Gastrocnemius medialis (tissue), 4 donors: ENCODE measurements at regions of chr15 and their contacts with region 1.

Region 1: DNA sequence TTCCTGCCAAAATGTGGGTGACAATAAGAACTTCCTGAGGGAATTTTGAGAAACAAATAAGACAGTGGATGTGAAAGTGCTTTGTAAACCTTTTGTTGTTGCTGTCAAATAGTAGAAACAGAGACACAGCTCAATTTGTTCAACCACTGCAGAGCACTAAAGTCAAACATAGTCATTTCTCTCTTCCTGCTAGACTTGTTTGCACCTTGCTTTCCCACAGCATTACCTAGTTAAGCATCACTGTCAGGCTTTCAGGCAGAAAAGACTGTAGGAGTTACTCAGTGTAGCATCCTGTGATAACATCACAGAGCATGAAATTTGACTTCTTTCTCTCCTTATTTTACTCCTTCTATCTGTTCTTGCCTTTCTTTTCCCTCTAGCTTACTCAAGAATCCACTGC is 27.1 kb downstream of the SLC12A1 start:
- DNase-seq: no peak
- ATAC-seq: no peak
- H3K4me3 ChIP-seq: no peak overlapping the region
- H3K27ac ChIP-seq: no peak overlapping the region
- H3K4me1 ChIP-seq: no peaks in the 10 kb centered on the region
- H3K27me3 ChIP-seq: no peaks in the 10 kb centered on the region
- CTCF ChIP-seq: no peak
- POLR2A ChIP-seq: no peak

Region 2: DNA sequence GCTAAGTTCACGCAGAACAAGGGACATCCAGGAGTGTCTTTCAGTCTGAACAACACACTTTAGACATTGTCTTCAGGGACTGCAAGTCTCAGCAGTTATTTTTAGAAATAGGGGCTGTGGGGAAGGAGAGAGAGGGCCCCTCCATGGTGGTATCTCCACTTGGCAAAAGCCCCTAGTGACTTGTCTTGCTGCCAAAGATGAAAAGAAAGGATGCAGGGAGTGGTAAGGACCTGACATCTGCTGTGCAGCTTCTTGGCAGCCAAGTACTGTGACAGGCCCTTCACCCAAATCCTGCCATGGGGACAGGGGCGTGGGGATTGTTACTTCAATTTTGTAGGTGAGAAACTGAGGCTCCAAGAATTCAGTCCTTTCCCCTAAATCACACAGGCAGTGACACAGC is 536.9 kb before region 1 on chr15:
- in situ Hi-C with region 1: no loop called
- intact Hi-C with region 1: no loop called
- DNase-seq: no peak
- ATAC-seq: no peak
- H3K4me3 ChIP-seq: no peak overlapping the region
- H3K27ac ChIP-seq: no peak overlapping the region
- H3K4me1 ChIP-seq: no peaks in the 10 kb centered on the region
- H3K27me3 ChIP-seq: no peaks in the 10 kb centered on the region
- CTCF ChIP-seq: no peak
- POLR2A ChIP-seq: no peak

Region 3: GRCh38 chr15:48149858-48150257 is 83.4 kb before region 1 on chr15:
- in situ Hi-C with region 1: no loop called
- intact Hi-C with region 1: loop called (anchors 10 kb)
- DNase-seq: no peak
- ATAC-seq: no peak
- H3K4me3 ChIP-seq: no peak overlapping the region
- H3K27ac ChIP-seq: no peak overlapping the region
- H3K4me1 ChIP-seq: no peaks in the 10 kb centered on the region
- H3K27me3 ChIP-seq: no peaks in the 10 kb centered on the region
- CTCF ChIP-seq: no peak
- POLR2A ChIP-seq: no peak

Region 4: DNA sequence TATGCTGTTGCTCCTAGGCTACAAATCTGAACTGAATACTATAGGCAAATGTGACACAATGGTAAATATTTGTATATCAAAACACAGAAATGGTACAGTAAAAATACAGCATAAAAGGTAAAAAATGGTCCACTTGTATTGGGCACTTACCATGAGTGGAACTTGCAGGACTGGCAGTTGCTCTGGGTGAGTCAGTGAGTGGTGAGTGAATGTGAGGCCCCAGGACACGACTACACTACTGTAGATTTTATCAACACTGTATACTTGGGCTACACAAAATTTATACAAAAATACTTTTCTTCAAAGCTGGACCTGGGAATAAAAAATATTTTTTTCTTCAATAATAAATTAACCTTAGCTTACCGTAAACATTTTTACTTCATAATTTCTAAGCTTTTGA is 56.4 kb after region 1 on chr15:
- in situ Hi-C with region 1: no loop called
- intact Hi-C with region 1: no loop called
- DNase-seq: no peak
- ATAC-seq: no peak
- H3K4me3 ChIP-seq: no peak overlapping the region
- H3K27ac ChIP-seq: no peak overlapping the region
- H3K4me1 ChIP-seq: no peaks in the 10 kb centered on the region
- H3K27me3 ChIP-seq: peaks cover 0 to 5% (median 0%) of the 10 kb centered on the region in 3 donors
- CTCF ChIP-seq: no peak
- POLR2A ChIP-seq: no peak